AG04449 (cell line): ENCODE measurements at regions of chr15 and their contacts with region 1.

Region 1: GRCh38 chr15:29747837-29748417 is 74.3 kb downstream of the TJP1 start:
- DNase-seq: no peak
- H3K4me3 ChIP-seq: no peak overlapping the region
- CTCF ChIP-seq: peak; percentile 4

Region 2: DNA sequence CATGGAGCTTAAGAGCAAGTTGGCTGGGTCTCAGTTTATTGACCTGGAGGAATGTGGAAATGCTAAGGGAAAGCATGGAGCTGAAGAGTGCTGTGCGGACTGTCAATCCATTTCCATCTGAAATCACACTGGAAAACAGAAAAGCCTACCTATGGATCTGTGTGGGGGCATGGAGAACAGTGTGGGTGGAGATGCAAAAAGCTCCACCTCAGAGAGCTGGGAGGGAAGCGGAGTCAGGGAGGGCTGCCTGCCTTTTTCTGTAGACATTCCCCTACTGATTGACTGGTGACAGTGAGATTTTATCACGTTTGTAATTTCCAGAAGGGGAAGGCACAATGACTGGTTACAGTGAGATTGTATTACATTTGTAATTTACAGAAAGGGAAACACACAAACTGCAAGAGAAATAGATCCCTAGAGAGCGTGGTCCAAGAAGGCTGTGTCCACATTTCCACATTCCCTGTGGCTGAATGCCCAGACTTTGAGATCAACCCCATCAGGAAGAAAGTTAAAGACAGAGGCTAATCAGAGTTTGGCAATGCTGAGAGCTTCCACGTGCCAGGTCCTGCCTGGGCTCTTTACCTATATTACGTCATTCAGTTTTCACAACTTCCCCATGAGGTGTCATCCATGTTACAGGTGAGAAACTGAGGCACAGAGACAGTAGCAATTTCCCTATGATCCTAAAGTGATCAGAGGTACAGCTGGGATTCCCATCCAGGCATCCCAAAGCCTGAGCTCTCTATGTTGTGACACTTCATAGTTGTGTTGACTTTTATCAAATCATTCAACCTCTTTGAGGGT is 410.6 kb before region 1 on chr15:
- CTCF ChIA-PET with region 1: no interaction called
- POLR2A ChIA-PET with region 1: no interaction called
- DNase-seq: peak; percentile 36
- H3K4me3 ChIP-seq: no peak overlapping the region
- CTCF ChIP-seq: no peak

Region 3: DNA sequence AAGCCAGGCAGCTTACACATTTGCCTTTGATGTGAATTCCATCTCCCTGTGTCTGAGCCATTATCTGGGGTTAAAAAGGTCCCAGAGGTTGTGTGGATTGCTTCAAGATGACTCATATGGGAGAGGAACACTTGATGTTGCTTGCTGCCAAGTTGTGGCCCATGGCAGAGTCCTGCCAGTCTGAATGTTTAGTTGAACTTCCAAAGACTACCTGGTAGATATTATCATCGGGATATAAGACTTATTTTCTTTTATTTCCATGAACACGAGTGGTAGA is 11.2 kb before region 1 on chr15:
- CTCF ChIA-PET with region 1: interaction called, 24 read pairs
- POLR2A ChIA-PET with region 1: no interaction called
- DNase-seq: no peak
- H3K4me3 ChIP-seq: no peak overlapping the region
- CTCF ChIP-seq: no peak

Region 4: GRCh38 chr15:30043211-30043655 is 295.3 kb after region 1 on chr15:
- CTCF ChIA-PET with region 1: interaction called, 31 read pairs
- POLR2A ChIA-PET with region 1: no interaction called
- DNase-seq: no peak
- H3K4me3 ChIP-seq: no peak overlapping the region
- CTCF ChIP-seq: peak; percentile 1

Region 5: DNA sequence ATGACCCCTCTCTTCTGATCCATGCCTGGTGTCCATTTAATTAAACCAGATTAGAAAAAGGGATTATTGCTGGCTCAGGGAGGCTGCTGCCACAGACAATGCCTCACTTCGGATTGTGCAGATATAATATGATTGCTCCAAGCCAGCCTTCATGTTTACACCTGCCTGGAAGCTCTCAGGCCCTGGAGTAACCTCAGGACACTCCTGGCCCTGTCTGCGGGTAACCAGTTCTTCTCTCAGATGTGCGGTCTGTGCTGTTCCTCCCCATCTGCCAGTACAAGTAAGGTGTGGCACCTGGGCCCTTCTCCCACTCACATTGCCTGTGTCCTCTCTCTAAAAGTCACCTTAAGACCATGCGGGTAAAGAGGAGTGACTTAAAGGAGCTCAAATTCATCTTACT is 326.0 kb after region 1 on chr15:
- CTCF ChIA-PET with region 1: interaction called, 107 read pairs
- POLR2A ChIA-PET with region 1: no interaction called
- DNase-seq: no peak
- H3K4me3 ChIP-seq: no peak overlapping the region
- CTCF ChIP-seq: no peak